PC-3 (cell line): ENCODE measurements at regions of chr21 and their contacts with region 1.

Region 1: GRCh38 chr21:16117851-16118592 is 388.2 kb downstream of the USP25 start:
- DNase-seq: peak; percentile 90
- ATAC-seq: peak; percentile 100
- H3K4me3 ChIP-seq: peak overlapping the region; percentile 33; the same call in 1 of the 2 replicates
- H3K27ac ChIP-seq: no peak overlapping the region
- H3K4me1 ChIP-seq: peaks cover 18% of the 10 kb centered on the region
- H3K27me3 ChIP-seq: no peaks in the 10 kb centered on the region
- CTCF ChIP-seq: no peak

Region 2: GRCh38 chr21:16046625-16047340 is 71.2 kb before region 1 on chr21:
- CTCF ChIA-PET with region 1: no interaction called
- POLR2A ChIA-PET with region 1: no interaction called
- intact Hi-C with region 1: loop called (anchors 5 kb)
- DNase-seq: peak; percentile 91
- ATAC-seq: peak; percentile 98
- H3K4me3 ChIP-seq: peak overlapping the region; percentile 36; the same call in 1 of the 2 replicates
- H3K27ac ChIP-seq: peak overlapping the region; percentile 76
- H3K4me1 ChIP-seq: peaks cover 17% of the 10 kb centered on the region
- H3K27me3 ChIP-seq: no peaks in the 10 kb centered on the region
- CTCF ChIP-seq: no peak

Region 3: GRCh38 chr21:16159213-16159970 is 41.4 kb after region 1 on chr21:
- CTCF ChIA-PET with region 1: no interaction called
- POLR2A ChIA-PET with region 1: no interaction called
- intact Hi-C with region 1: loop called (anchors 2 kb)
- DNase-seq: peak; percentile 71
- ATAC-seq: peak; percentile 94
- H3K4me3 ChIP-seq: peak overlapping the region; percentile 24; the same call in 1 of the 2 replicates
- H3K27ac ChIP-seq: peak overlapping the region; percentile 81
- H3K4me1 ChIP-seq: peaks cover 19% of the 10 kb centered on the region
- H3K27me3 ChIP-seq: no peaks in the 10 kb centered on the region
- CTCF ChIP-seq: no peak

Region 4: DNA sequence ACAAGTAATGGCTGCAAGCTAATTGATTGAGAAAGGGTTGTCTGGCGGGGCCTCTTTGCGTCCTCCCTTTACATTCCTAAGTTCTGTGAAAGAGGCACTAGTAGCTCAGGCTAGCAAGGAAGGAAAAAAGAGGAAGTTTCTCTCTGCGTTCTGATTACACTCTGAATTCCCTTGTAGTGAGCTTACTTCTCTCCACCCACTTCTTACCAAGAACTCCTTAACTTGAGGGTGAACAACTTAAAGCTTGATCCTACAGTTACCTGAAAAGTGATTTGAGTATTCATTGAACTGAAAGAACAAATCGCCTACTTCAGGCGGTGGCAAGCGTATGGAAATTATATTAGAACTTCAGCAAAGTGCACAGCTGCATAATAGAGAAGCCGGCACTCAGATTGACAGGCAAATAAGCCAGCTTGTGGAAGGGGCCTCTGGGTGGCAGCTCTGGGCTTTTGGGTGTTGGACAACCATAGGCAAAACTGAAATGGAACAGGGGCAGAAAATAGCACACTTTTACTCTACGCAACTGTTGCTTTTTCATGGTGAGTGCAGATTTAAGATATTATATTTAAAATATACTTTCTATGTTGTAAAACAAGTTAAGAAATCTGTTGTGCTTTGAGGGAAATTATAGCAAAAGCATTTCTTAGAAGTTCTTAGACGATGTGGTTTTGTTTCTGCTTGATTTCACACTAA is 76.2 kb after region 1 on chr21:
- CTCF ChIA-PET with region 1: no interaction called
- POLR2A ChIA-PET with region 1: no interaction called
- intact Hi-C with region 1: loop called (anchors 2 kb)
- DNase-seq: peak; percentile 35
- ATAC-seq: peak; percentile 75
- H3K4me3 ChIP-seq: peak overlapping the region; percentile 48
- H3K27ac ChIP-seq: peak overlapping the region; percentile 2; the same call in 1 of the 2 replicates
- H3K4me1 ChIP-seq: no peaks in the 10 kb centered on the region
- H3K27me3 ChIP-seq: peaks cover 48% of the 10 kb centered on the region
- CTCF ChIP-seq: no peak; the same call in 1 of the 2 replicates